ENCODE measurements at regions of chr10 and their contacts with region 1.

Region 1: GRCh38 chr10:97731346-97732051 is 5.4 kb upstream of the ZFYVE27 start:
- DNase-seq: peak in 9 of 10 donors; percentile 53 to 88 (median 61)
- H3K4me3 ChIP-seq: no peak overlapping the region
- H3K27ac ChIP-seq: peak overlapping the region in 2 of 59 donors; percentile 17 to 36
- H3K27me3 ChIP-seq: peaks cover 0 to 3% (median 0%) of the 10 kb centered on the region in 45 donors
- CTCF ChIP-seq: peak; percentile 74 to 99 (median 91)

Region 2: GRCh38 chr10:97572214-97572989 is 159.1 kb before region 1 on chr10 and contains the start of gene ANKRD2:
- intact Hi-C with region 1: loop called in 1 of 2 experiments (anchors 5 kb)
- DNase-seq: peak; percentile 64 to 85 (median 80)
- H3K4me3 ChIP-seq: no peak within 1 kb of the TSS
- H3K27ac ChIP-seq: peak within 1 kb of the TSS in 57 of 59 donors; percentile 4 to 90 (median 59)
- H3K27me3 ChIP-seq: no peaks in the 10 kb centered on the region
- CTCF ChIP-seq: peak; percentile 46 to 91 (median 84)
- total RNA-seq, gene ANKRD2: 0.43 to 9.5 (median 2.8) TPM

Region 3: GRCh38 chr10:97676770-97677581 is 54.5 kb before region 1 on chr10:
- intact Hi-C with region 1: loop called in 1 of 2 experiments (anchors 2 kb)
- DNase-seq: peak in 1 of 10 donors; percentile 53
- H3K4me3 ChIP-seq: no peak overlapping the region
- H3K27ac ChIP-seq: peak overlapping the region in 47 of 59 donors; percentile 0 to 90 (median 60)
- H3K27me3 ChIP-seq: no peaks in the 10 kb centered on the region
- CTCF ChIP-seq: peak; percentile 64 to 96 (median 86)

Region 4: DNA sequence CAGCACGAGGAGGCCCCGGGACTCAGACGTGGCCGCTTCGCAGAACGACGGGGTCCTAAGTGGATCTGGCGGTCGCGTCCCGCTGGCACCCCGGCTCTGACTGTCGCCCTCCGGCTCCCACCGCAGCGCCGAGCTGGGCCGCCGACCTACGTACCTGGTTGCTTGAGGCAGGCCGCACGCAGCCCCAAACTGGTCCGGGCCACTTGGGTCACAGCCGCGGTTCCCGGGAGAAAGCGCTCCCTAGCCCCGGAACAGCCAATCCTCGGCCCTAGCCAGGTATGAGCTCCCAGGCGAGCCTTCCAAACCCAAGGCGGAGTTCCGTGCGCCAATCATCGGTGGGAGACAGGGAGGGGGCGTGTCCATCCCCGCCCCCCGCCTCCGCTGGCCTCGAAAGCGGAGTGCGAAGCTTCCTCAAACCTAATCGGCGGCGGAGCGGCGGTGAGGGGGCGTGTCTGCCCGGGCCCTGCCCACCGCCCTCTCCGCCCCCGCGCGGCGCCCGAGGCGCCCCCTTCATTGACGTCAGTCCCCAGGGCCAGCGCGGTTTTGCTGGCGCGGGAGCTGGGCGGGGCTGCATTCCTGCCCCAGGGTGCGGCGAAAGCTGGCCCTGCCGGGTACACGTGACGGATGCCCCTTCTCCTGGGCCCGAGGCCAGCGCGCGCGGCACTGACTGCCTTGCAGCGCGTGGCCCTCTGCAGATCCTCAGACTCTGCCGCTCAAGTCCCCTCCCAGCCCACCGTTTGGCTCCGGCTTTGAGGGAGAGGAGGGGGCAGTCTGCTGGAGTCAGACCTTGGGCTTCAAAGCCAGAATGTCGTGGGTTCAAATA is 44.3 kb before region 1 on chr10 and contains the start of gene AVPI1:
- intact Hi-C with region 1: loop called (anchors 2 to 5 kb)
- DNase-seq: peak; percentile 85 to 96 (median 93)
- H3K4me3 ChIP-seq: peak within 1 kb of the TSS; percentile 43 to 93 (median 77)
- H3K27ac ChIP-seq: peak within 1 kb of the TSS; percentile 62 to 95 (median 91)
- H3K27me3 ChIP-seq: no peaks in the 10 kb centered on the region
- CTCF ChIP-seq: peak in 34 of 56 donors; percentile 4 to 64 (median 27)
- total RNA-seq, gene AVPI1: 15.7 to 41.1 (median 27.6) TPM

Region 5: DNA sequence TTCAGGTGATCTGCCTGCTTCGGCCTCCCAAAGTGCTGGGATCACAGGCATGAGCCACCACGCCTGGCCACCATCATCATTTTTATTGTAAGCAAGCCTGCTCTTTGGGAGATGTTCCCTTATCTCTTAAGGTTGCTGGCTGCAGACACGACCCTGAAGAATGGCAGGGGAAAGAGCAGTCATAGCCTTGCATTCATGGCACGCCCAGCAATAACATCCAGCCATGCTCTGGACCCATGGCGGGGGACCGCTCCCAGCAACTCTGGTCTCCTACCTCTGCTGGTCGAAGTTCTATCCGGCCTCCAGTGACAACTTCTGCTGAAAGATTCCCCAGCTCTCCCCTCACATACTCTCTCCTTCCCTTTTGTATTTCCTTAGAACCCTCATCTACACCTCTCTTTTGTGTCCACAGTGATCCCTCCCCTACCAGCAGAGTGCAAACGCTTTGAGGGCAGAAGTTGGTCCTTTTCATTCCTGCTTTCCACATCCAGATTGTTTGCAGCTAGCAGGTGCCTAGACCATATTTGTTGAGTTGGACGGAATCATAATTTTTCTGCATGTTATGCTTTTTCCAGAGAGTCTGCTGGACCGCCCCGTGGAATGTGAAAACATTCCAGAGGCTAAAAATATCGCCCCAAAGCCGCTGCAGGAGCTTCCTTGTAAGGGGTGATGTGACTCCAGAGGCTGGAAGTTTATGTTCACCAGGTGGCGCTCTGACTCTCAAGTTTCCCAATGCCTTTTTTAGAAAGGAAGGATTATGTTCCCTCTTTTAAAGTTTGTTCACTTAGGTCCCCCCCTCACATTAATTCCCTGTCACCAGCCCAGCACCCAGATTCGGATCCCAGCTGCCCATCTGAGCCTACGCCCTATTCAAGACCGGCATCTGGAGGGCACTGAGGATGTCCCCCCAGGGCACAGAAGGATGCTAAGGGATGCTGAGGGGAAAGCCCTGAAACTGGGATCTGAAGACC is 22.2 kb before region 1 on chr10:
- intact Hi-C with region 1: loop called in 1 of 2 experiments (anchors 2 kb)
- DNase-seq: peak in 7 of 10 donors; percentile 40 to 73 (median 62)
- H3K4me3 ChIP-seq: no peak overlapping the region
- H3K27ac ChIP-seq: peak overlapping the region in 15 of 59 donors; percentile 3 to 69 (median 47)
- H3K27me3 ChIP-seq: no peaks in the 10 kb centered on the region
- CTCF ChIP-seq: peak; percentile 25 to 81 (median 66)

Measured in dorsolateral prefrontal cortex (tissue), 120 donors.